Heart left ventricle (tissue), 16 donors: ENCODE measurements at regions of chr11 and their contacts with region 1.

Region 1: GRCh38 chr11:102733232-102733875 is 8.6 kb upstream of the MMP8 start:
- DNase-seq: peak; percentile 15 to 73 (median 38)
- ATAC-seq: peak in 1 of 4 donors; percentile 48
- H3K4me3 ChIP-seq: no peak overlapping the region
- H3K27ac ChIP-seq: no peak overlapping the region
- H3K4me1 ChIP-seq: peaks cover 0 to 2% (median 0%) of the 10 kb centered on the region in 12 donors
- H3K27me3 ChIP-seq: peaks cover 0 to 18% (median 0%) of the 10 kb centered on the region in 9 donors
- CTCF ChIP-seq: peak; percentile 26 to 67 (median 47)
- POLR2A ChIP-seq: no peak

Region 2: DNA sequence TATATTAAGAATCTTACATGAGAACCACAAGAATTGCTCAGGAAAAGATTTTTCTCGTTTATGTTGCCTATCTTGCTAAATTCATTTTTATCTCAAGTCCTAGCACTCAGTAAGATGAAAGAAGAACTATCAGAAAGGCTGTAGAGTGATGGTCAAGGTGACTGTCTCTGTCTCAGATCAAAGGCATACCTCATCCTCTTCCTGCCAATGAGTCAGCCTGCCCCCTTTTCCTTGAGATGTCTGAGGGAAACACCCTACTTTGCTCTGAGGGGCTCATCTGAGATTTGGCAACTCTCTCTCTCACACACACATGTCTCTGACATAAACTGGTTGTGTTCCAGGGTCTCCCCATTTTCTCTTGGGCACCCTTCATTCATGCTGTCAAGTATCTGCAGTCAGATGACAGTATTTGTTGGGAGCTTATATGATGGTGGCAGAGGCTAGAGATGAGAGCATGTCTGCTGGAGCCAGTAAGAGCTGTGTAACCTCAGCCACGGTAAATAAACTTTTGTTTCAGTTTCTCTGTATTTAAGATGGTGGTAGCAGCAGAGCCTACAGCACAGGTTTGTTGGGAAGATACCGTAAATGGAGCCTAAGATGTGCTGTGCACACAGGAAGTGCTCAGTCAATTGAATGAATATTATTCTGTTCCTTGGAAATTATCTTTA is 29.4 kb before region 1 on chr11:
- intact Hi-C with region 1: no loop called
- DNase-seq: no peak
- ATAC-seq: no peak
- H3K4me3 ChIP-seq: no peak overlapping the region
- H3K27ac ChIP-seq: no peak overlapping the region
- H3K4me1 ChIP-seq: no peaks in the 10 kb centered on the region
- H3K27me3 ChIP-seq: no peaks in the 10 kb centered on the region
- CTCF ChIP-seq: no peak
- POLR2A ChIP-seq: no peak

Region 3: DNA sequence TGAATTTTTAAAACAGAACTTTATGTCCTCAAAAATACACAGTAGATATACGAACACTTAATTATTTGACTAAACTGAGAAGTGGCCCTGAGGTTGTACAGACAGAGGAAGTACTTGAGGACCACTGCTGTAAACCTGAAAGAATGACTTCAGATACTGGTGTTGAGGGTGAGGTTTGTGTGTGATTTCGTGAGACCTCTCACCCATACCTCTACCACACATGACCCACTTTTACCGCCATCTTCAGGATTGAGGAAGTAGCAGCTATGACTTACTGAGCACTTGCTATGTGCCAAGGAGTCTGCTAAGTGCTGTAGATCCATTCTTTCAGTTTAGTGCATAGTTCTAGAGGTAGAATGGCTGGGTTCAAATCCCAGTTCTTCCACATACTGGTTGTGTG is 200.3 kb after region 1 on chr11:
- intact Hi-C with region 1: loop called in 1 of 10 experiments (anchors 10 kb)
- DNase-seq: no peak
- ATAC-seq: no peak
- H3K4me3 ChIP-seq: no peak overlapping the region
- H3K27ac ChIP-seq: no peak overlapping the region
- H3K4me1 ChIP-seq: no peaks in the 10 kb centered on the region
- H3K27me3 ChIP-seq: peaks cover 0 to 17% (median 0%) of the 10 kb centered on the region in 9 donors
- CTCF ChIP-seq: no peak
- POLR2A ChIP-seq: no peak

Region 4: GRCh38 chr11:102940714-102941588 is 207.6 kb after region 1 on chr11:
- intact Hi-C with region 1: loop called in 6 of 10 experiments (anchors 2 to 10 kb)
- DNase-seq: peak in 1 of 5 donors; percentile 21
- ATAC-seq: peak in 1 of 4 donors; percentile 28
- H3K4me3 ChIP-seq: no peak overlapping the region
- H3K27ac ChIP-seq: no peak overlapping the region
- H3K4me1 ChIP-seq: no peaks in the 10 kb centered on the region
- H3K27me3 ChIP-seq: peaks cover 0 to 6% (median 0%) of the 10 kb centered on the region in 9 donors
- CTCF ChIP-seq: peak; percentile 62 to 80 (median 74)
- POLR2A ChIP-seq: no peak